ENCODE measurements at regions of chr10 and their contacts with region 1.

Region 1: GRCh38 chr10:12513775-12514673 is 164.7 kb downstream of the CAMK1D start:
- DNase-seq: no peak
- ATAC-seq: no peak

Region 2: GRCh38 chr10:12583891-12584595 is 70.0 kb after region 1 on chr10:
- intact Hi-C with region 1: loop called (anchors 2 kb)
- DNase-seq: no peak
- ATAC-seq: no peak

Region 3: DNA sequence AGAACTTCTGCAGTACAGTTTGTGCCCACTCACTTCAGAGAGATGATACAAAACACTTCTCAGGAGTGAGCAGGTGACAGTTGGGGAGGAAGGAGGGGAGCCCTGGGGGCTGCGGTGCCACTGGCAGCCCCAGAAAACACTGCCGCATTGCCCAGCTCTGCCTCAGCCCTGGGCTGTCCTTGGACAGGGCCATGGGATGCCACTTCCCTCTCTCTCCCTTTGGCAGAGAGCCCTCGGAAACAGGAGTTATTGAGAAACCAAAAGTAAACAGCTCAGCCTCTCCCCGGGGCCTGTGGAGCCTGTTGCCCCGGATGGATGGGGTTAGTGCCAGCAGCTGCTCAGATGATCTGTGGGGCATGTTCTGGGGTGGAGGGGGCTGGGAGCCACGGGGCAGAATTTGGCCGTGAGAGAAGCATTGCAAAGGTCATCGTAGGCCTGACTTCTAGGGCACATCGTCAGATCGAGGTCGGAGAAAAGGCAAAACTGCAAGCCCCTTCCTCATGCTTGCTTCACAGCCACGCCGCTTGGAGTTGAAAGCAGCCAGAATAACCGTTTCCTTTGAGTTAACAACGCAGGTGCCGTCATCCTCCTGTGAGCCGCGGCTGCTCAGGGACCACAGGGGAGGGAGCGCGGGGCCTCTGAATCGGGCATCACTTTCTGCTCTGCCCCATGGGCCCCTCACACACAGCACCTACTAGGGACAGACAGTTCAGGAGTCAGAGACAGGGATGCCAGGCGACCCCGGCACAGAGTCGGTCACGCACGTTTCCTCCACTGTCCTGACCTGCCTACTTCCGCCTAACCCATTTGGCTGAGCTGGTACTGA is 91.8 kb after region 1 on chr10:
- intact Hi-C with region 1: no loop called
- DNase-seq: peak; percentile 69
- ATAC-seq: peak; percentile 93

Region 4: GRCh38 chr10:13485623-13486022 is 971.6 kb after region 1 on chr10:
- intact Hi-C with region 1: loop called (anchors 5 kb)
- DNase-seq: no peak
- ATAC-seq: no peak

Measured in sciatic nerve (tissue), 2 donors.